Panc1 (cell line): ENCODE measurements at regions of chr12 and their contacts with region 1.

Region 1: GRCh38 chr12:100229058-100229637 is 28.5 kb downstream of the ACTR6 start:
- DNase-seq: peak; percentile 7
- ATAC-seq: peak; percentile 84
- H3K4me3 ChIP-seq: no peak overlapping the region
- H3K27ac ChIP-seq: no peak overlapping the region
- H3K4me1 ChIP-seq: peaks cover 4% of the 10 kb centered on the region
- H3K27me3 ChIP-seq: no peaks in the 10 kb centered on the region
- CTCF ChIP-seq: peak; percentile 59

Region 2: GRCh38 chr12:100170313-100170858 is 58.8 kb before region 1 on chr12:
- CTCF ChIA-PET with region 1: interaction called, 11 read pairs
- POLR2A ChIA-PET with region 1: no interaction called
- in situ Hi-C with region 1: no loop called
- intact Hi-C with region 1: no loop called
- DNase-seq: no peak
- ATAC-seq: no peak
- H3K4me3 ChIP-seq: no peak overlapping the region
- H3K27ac ChIP-seq: no peak overlapping the region
- H3K4me1 ChIP-seq: no peaks in the 10 kb centered on the region
- H3K27me3 ChIP-seq: no peaks in the 10 kb centered on the region
- CTCF ChIP-seq: no peak

Region 3: GRCh38 chr12:100185361-100185894 is 43.7 kb before region 1 on chr12:
- CTCF ChIA-PET with region 1: no interaction called
- POLR2A ChIA-PET with region 1: interaction called, 11 read pairs
- in situ Hi-C with region 1: no loop called
- intact Hi-C with region 1: no loop called
- DNase-seq: no peak
- ATAC-seq: no peak
- H3K4me3 ChIP-seq: no peak overlapping the region
- H3K27ac ChIP-seq: no peak overlapping the region
- H3K4me1 ChIP-seq: no peaks in the 10 kb centered on the region
- H3K27me3 ChIP-seq: no peaks in the 10 kb centered on the region
- CTCF ChIP-seq: no peak

Region 4: DNA sequence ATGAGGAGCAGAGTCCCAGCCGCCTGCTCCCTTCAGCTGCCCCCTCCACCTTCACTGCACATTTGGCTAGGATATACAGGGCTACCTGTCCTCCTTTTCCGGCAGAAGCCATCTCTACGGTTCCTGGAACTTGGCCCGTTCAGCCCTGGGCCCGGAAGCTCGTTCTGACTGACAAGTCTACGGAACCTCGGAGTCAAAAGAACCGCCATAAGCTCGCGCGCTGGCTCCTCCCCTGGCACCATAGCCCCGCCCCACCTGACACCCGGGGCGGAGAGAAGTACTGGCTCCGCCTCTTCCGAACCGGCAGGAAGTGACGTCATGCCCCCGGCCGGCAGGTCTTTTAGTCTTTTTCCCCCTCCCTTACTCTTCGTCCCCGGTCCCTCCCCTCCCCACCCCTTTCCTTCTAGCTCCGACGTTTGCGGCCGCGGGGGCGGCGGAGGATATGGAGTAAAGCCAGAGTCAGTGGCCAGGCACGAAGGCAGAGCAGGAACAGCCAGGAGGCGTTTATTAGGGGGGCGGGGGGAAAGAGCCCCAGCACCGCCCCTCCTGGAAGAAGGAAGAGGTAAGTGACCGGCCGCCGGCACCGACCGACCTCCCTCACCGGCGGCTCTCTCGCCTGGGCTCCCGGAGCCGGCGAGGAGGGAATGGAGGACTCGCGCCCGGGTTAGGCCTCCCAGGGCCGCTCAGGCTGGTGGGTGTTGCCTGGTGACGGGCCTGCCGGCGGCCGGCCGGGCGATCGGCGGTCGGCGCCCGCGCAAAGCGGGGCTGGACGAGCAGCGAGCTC is 37.9 kb after region 1 on chr12 and contains the starts of genes DEPDC4 and SCYL2:
- CTCF ChIA-PET with region 1: no interaction called
- POLR2A ChIA-PET with region 1: interaction called, 19 read pairs
- in situ Hi-C with region 1: no loop called
- intact Hi-C with region 1: no loop called
- DNase-seq: peak; percentile 78
- ATAC-seq: peak; percentile 95
- H3K4me3 ChIP-seq: peak within 1 kb of the TSS; percentile 60 to 91
- H3K27ac ChIP-seq: peak within 1 kb of the TSS; percentile 76
- H3K4me1 ChIP-seq: peaks cover 8% of the 10 kb centered on the region; the same call in 1 of the 2 replicates
- H3K27me3 ChIP-seq: no peaks in the 10 kb centered on the region
- CTCF ChIP-seq: no peak
- total RNA-seq, gene DEPDC4: 2.6 TPM
- total RNA-seq, gene SCYL2: 45.3 TPM